ENCODE measurements at regions of chr17 and their contacts with region 1.

Region 1: GRCh38 chr17:74379495-74380085 is 12.3 kb downstream of the GPR142 start:
- DNase-seq: peak; percentile 85 to 94
- ATAC-seq: peak; percentile 84 to 96
- H3K4me3 ChIP-seq: 0 out of 3 replicates have a peak overlapping the region, but pooled peaks have one; percentile 4
- H3K27ac ChIP-seq: peak overlapping the region; percentile 36 to 80; a peak in 5 of 6 replicates
- H3K4me1 ChIP-seq: peaks cover 14% of the 10 kb centered on the region
- CTCF ChIP-seq: peak; percentile 99
- EP300 ChIP-seq: no peak
- POLR2A ChIP-seq: no peak
- RAD21 ChIP-seq: peak; percentile 100

Region 2: GRCh38 chr17:74368092-74369081 is 11.2 kb before region 1 on chr17:
- CTCF ChIA-PET with region 1: interaction called, 674 read pairs
- POLR2A ChIA-PET with region 1: no interaction called
- DNase-seq: peak; percentile 66 to 88
- ATAC-seq: peak; percentile 62 to 89
- H3K4me3 ChIP-seq: no peak overlapping the region
- H3K27ac ChIP-seq: no peak overlapping the region
- H3K4me1 ChIP-seq: peaks cover 6% of the 10 kb centered on the region; the same call in 1 of the 3 replicates
- CTCF ChIP-seq: peak; percentile 94
- EP300 ChIP-seq: no peak
- POLR2A ChIP-seq: no peak
- RAD21 ChIP-seq: peak; percentile 85 to 87

Region 3: GRCh38 chr17:74417178-74418045 is 37.8 kb after region 1 on chr17:
- CTCF ChIA-PET with region 1: interaction called, 138 read pairs
- POLR2A ChIA-PET with region 1: no interaction called
- DNase-seq: peak; percentile 90 to 98
- ATAC-seq: peak; percentile 98 to 99
- H3K4me3 ChIP-seq: 0 out of 3 replicates have a peak overlapping the region, but pooled peaks have one; percentile 6
- H3K27ac ChIP-seq: peak overlapping the region; percentile 70 to 86
- H3K4me1 ChIP-seq: peaks cover 28% of the 10 kb centered on the region
- CTCF ChIP-seq: no peak
- EP300 ChIP-seq: no peak
- POLR2A ChIP-seq: no peak
- RAD21 ChIP-seq: peak in 1 of 2 experiments; percentile 20; a peak in 1 of 5 replicates

Region 4: GRCh38 chr17:74437702-74438101 is 58.1 kb after region 1 on chr17:
- CTCF ChIA-PET with region 1: interaction called, 45 read pairs
- POLR2A ChIA-PET with region 1: no interaction called
- DNase-seq: peak in 1 of 2 experiments; percentile 43
- ATAC-seq: no peak
- H3K4me3 ChIP-seq: no peak overlapping the region
- H3K27ac ChIP-seq: no peak overlapping the region
- H3K4me1 ChIP-seq: peaks cover 18% of the 10 kb centered on the region
- CTCF ChIP-seq: peak; percentile 50
- EP300 ChIP-seq: no peak
- POLR2A ChIP-seq: no peak
- RAD21 ChIP-seq: peak in 1 of 2 experiments; percentile 52; a peak in 2 of 5 replicates

Region 5: GRCh38 chr17:74485022-74485743 is 105.6 kb after region 1 on chr17:
- CTCF ChIA-PET with region 1: interaction called, 138 read pairs
- POLR2A ChIA-PET with region 1: no interaction called
- DNase-seq: no peak
- ATAC-seq: no peak
- H3K4me3 ChIP-seq: no peak overlapping the region
- H3K27ac ChIP-seq: no peak overlapping the region
- H3K4me1 ChIP-seq: no peaks in the 10 kb centered on the region
- CTCF ChIP-seq: no peak
- EP300 ChIP-seq: no peak
- POLR2A ChIP-seq: no peak
- RAD21 ChIP-seq: no peak

Region 6: DNA sequence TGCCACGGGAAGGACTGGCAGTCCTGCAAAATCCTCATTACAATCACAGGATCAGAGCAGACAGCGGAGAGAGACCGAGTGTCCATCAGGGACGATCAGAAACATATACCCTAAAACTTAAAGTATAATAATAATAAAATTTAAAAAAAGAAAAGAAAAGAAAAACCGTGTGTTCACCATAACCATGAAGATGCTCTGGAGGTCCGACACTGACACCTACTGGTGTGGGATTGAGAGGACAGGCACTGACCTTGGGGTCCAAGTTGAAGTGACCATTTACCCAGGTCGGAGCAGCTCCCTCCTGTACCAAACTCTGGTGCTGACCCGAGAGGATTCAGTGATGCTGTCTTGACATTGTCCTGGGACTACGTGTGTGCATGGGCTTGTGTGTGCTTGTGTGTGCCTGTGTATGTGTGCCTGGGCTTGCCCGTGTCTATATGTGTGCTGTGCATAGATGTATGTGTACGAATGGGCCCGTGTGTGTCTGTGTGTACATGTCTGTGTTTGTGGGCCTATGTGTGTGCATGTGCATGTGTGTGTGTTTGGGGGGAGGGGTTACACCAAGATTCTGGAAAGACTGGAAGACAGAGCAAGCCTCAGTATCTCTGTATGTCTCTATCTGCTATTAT is 222.5 kb after region 1 on chr17:
- CTCF ChIA-PET with region 1: interaction called, 40 read pairs
- POLR2A ChIA-PET with region 1: no interaction called
- DNase-seq: peak; percentile 70 to 79
- ATAC-seq: peak; percentile 65 to 85; a peak in 4 of 6 replicates
- H3K4me3 ChIP-seq: no peak overlapping the region
- H3K27ac ChIP-seq: peak overlapping the region in 1 of 2 experiments; percentile 44; a peak in 2 of 6 replicates
- H3K4me1 ChIP-seq: peaks cover 12% of the 10 kb centered on the region
- CTCF ChIP-seq: peak; percentile 96
- EP300 ChIP-seq: no peak
- POLR2A ChIP-seq: no peak
- RAD21 ChIP-seq: peak; percentile 91 to 93